CD8-positive, alpha-beta memory T cell (primary cell): ENCODE measurements at regions of chr10 and their contacts with region 1.

Region 1: DNA sequence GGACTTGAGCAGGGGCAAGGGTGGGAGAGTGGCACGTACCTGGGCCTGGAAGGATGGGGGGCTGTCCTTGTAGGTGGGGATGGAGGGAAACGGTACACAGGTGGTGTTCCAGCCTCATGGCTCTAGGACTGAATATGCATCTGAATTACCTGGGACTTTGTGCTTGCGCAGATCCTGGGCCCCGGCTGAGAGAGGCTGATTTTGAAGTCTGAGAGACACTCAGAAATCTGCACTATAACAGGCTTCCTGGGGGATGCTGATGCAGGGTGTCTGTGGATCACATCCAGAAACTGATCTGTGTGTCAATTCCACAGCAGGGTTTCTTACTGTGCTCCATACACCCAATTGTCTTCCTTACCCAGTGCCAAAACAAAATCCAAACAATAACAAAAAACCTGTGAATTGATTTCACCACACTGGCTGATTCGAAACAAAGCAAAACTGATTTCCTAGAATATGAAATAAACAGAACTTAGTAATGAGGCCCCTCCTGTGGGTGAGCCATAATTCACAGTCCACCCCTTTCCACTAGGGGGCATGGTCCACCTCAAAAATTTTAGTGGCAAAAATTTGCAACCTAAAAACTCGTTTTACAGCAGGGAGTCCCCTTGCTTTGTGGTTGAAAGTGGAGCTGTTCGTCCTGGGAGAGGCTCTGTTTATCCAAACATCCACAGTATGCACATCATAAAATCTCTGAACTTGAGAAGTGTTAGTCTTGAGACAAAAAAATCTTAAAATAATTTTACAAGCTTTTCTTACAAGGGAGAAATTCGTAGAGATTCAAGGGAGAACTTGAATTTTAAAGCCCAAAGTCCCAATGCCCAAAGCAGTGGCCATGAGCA is 32.0 kb upstream of the PLEKHA1 start:
- DNase-seq: peak; percentile 38 to 74 (median 55)
- H3K4me3 ChIP-seq: no peak overlapping the region
- H3K4me3 Mint-ChIP-seq: no peak overlapping the region
- H3K27ac ChIP-seq: no peak overlapping the region
- H3K27ac Mint-ChIP-seq: peak overlapping the region in 2 of 8 donors; percentile 8 to 77
- H3K4me1 ChIP-seq: no peaks in the 10 kb centered on the region
- H3K4me1 Mint-ChIP-seq: peaks cover 0 to 9% (median 2%) of the 10 kb centered on the region in 3 donors
- H3K27me3 ChIP-seq: no peaks in the 10 kb centered on the region
- H3K27me3 Mint-ChIP-seq: peaks cover 3 to 11% of the 10 kb centered on the region in 2 donors

Region 2: DNA sequence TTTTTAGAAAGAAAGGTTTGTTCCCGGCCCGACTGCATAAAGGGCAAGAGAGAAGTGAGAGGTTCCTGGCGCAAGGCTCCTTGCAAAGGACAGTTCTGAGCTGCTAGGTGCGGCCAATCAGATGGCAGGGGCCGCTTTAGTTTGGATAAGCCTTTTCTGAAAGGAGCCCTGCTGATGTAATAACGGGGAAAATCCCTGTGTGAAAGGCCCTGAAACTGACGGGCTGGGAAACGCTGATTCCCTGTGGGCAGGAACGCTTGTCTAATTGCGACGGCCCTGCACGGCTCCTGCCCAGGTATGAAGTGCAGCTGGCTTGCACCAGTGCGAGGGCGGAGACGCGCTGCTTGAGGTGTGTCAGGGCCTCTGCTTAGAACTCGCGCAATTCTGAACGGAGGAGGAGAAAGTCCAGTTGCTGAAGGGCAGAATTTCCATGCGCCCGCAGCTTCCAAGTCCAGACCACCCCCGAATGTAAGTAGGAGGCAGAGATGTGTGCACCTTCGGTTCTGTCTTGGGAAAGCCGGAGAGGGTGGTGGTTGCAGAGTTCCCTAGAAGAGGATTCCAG is 323.0 kb before region 1 on chr10:
- CTCF ChIA-PET with region 1: no interaction called
- POLR2A ChIA-PET with region 1: no interaction called
- DNase-seq: no peak
- H3K4me3 ChIP-seq: no peak overlapping the region
- H3K4me3 Mint-ChIP-seq: no peak overlapping the region
- H3K27ac ChIP-seq: no peak overlapping the region
- H3K27ac Mint-ChIP-seq: no peak overlapping the region
- H3K4me1 ChIP-seq: no peaks in the 10 kb centered on the region
- H3K4me1 Mint-ChIP-seq: no peaks in the 10 kb centered on the region
- H3K27me3 ChIP-seq: no peaks in the 10 kb centered on the region
- H3K27me3 Mint-ChIP-seq: peaks cover 12 to 14% of the 10 kb centered on the region in 2 donors

Region 3: GRCh38 chr10:122258136-122259074 is 84.1 kb before region 1 on chr10:
- CTCF ChIA-PET with region 1: no interaction called
- POLR2A ChIA-PET with region 1: no interaction called
- DNase-seq: no peak
- H3K4me3 ChIP-seq: no peak overlapping the region
- H3K4me3 Mint-ChIP-seq: no peak overlapping the region
- H3K27ac ChIP-seq: no peak overlapping the region
- H3K27ac Mint-ChIP-seq: no peak overlapping the region
- H3K4me1 ChIP-seq: no peaks in the 10 kb centered on the region
- H3K4me1 Mint-ChIP-seq: no peaks in the 10 kb centered on the region
- H3K27me3 ChIP-seq: no peaks in the 10 kb centered on the region
- H3K27me3 Mint-ChIP-seq: peaks cover 18 to 32% of the 10 kb centered on the region in 2 donors

Region 4: DNA sequence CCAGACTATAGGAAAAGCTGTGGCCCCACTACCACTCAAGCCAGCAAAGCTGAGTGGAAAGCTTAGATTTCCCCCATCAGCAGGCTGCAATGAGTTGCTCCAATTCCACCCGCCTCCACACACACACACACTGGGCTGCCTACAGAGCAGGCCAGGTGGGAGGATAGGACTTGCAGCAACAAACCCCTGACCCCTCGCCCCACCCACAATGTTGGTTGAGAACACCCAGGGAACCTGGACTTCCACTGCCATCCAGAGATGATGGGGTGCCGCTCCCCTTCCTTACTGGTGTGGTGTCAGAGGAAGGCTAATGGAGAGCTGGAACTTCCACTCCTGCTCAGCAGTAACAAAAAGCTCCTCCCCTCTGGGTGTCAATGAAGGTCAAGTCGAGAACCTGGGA is 15.2 kb after region 1 on chr10:
- CTCF ChIA-PET with region 1: interaction called, 10 read pairs
- POLR2A ChIA-PET with region 1: no interaction called
- DNase-seq: no peak
- H3K4me3 ChIP-seq: no peak overlapping the region
- H3K4me3 Mint-ChIP-seq: no peak overlapping the region
- H3K27ac ChIP-seq: no peak overlapping the region
- H3K27ac Mint-ChIP-seq: peak overlapping the region in 1 of 8 donors; percentile 15
- H3K4me1 ChIP-seq: no peaks in the 10 kb centered on the region
- H3K4me1 Mint-ChIP-seq: peaks cover 0 to under 1% (median 0%) of the 10 kb centered on the region in 3 donors
- H3K27me3 ChIP-seq: no peaks in the 10 kb centered on the region
- H3K27me3 Mint-ChIP-seq: peaks cover 5 to 6% of the 10 kb centered on the region in 2 donors

Region 5: DNA sequence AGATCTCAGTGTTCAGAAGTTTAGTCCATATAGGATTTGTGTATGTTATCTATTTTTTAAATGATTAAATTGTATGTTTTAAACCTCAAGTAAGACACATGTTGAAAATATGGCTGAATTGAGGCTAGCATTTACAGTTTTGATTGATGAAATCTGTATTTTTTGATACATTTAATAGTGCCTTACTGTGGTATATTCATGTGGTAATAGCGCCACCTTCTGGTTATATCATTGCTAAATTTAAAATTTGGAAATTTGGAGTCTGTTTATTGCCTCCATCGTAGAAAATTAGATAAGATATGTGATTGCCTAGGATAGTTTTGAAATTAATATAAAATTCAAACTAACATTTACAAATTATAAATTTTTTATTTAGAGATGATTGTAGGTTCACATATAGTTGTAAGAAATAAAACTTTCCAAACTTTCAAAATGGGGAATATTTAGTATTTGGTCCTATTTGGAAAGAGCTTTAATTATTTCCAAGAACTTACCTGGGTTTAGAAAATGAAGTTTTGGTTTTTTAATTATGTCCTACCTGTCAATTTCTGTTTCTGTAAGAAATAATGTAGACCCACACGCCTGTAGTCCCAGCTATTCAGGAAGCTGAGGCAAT is 92.8 kb after region 1 on chr10:
- CTCF ChIA-PET with region 1: interaction called, 85 read pairs
- POLR2A ChIA-PET with region 1: no interaction called
- DNase-seq: peak in 2 of 5 donors; percentile 44 to 49
- H3K4me3 ChIP-seq: no peak overlapping the region
- H3K4me3 Mint-ChIP-seq: no peak overlapping the region
- H3K27ac ChIP-seq: no peak overlapping the region
- H3K27ac Mint-ChIP-seq: peak overlapping the region in 3 of 8 donors; percentile 54 to 74 (median 61)
- H3K4me1 ChIP-seq: no peaks in the 10 kb centered on the region
- H3K4me1 Mint-ChIP-seq: peaks cover 7 to 8% (median 8%) of the 10 kb centered on the region in 3 donors
- H3K27me3 ChIP-seq: no peaks in the 10 kb centered on the region
- H3K27me3 Mint-ChIP-seq: peaks cover 0 to 1% of the 10 kb centered on the region in 2 donors

Region 6: GRCh38 chr10:122441961-122442360 is 99.4 kb after region 1 on chr10:
- CTCF ChIA-PET with region 1: interaction called, 17 read pairs
- POLR2A ChIA-PET with region 1: no interaction called
- DNase-seq: no peak
- H3K4me3 ChIP-seq: no peak overlapping the region
- H3K4me3 Mint-ChIP-seq: no peak overlapping the region
- H3K27ac ChIP-seq: no peak overlapping the region
- H3K27ac Mint-ChIP-seq: peak overlapping the region in 1 of 8 donors; percentile 18
- H3K4me1 ChIP-seq: no peaks in the 10 kb centered on the region
- H3K4me1 Mint-ChIP-seq: no peaks in the 10 kb centered on the region
- H3K27me3 ChIP-seq: no peaks in the 10 kb centered on the region
- H3K27me3 Mint-ChIP-seq: peaks cover 1 to 3% of the 10 kb centered on the region in 2 donors